Tibial artery (tissue), 4 donors: ENCODE measurements at regions of chr11 and their contacts with region 1.

Region 1: DNA sequence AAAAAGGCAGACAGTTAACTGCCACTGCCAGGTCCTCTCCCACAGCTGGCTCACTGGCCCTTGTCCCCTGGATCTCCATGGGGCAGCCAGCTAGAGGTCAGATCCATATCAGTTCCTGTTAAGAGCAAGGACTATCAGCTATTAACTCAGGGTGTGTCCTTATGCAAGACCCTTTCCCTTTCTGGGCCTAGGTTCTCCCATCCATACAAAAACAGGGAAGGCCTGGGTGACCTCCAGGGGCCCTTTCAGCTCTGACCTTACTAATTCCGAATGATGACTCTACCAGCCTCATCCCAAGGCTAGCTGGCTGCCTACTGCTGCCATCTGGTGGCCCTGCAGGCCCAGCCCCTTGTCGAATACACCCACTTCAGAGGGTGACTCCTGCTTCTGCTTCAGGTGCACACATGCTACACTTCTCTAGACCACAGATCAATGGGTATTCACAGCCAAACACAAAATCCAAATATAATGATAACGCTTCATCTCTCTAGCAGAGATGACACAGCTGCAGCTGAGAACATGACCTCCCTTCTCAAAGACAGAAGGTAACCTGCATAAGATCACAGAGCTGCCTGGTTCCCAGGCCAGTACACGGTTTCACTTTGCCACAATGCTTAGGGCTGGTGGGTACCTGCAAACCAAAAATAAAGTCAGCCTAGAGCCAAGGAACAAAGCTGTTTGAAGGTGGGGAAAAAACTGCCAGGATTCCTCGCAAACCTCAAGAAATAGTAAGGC is 34.1 kb downstream of the SERGEF start:
- DNase-seq: no peak
- H3K4me3 ChIP-seq: no peak overlapping the region
- H3K27ac ChIP-seq: no peak overlapping the region
- H3K4me1 ChIP-seq: no peaks in the 10 kb centered on the region
- H3K27me3 ChIP-seq: no peaks in the 10 kb centered on the region
- CTCF ChIP-seq: peak; percentile 24 to 37

Region 2: DNA sequence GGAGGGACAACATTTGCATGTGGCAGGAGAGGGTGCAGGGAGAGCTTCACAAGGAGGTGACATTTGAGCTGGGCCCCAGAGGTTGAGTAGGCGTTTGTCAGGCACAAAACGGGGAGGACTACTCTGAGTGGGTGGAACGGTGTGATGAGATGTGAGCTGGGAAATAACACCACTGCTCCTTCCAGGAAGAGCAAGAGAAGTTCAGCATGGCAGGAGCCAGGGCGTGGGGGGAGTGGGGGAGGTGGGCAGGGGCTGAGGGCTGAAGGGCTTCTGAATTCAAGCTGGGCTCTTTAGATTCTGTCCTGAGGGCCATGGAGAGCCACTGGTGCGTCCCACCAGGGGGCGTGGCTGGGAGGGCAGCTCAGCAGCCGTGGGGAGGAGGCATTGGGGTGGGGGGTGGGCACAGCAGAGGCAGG is 377.5 kb before region 1 on chr11:
- intact Hi-C with region 1: loop called (anchors 10 kb)
- DNase-seq: no peak
- H3K4me3 ChIP-seq: no peak overlapping the region
- H3K27ac ChIP-seq: no peak overlapping the region
- H3K4me1 ChIP-seq: no peaks in the 10 kb centered on the region
- H3K27me3 ChIP-seq: peaks cover 0 to 14% of the 10 kb centered on the region in 2 donors
- CTCF ChIP-seq: no peak

Region 3: DNA sequence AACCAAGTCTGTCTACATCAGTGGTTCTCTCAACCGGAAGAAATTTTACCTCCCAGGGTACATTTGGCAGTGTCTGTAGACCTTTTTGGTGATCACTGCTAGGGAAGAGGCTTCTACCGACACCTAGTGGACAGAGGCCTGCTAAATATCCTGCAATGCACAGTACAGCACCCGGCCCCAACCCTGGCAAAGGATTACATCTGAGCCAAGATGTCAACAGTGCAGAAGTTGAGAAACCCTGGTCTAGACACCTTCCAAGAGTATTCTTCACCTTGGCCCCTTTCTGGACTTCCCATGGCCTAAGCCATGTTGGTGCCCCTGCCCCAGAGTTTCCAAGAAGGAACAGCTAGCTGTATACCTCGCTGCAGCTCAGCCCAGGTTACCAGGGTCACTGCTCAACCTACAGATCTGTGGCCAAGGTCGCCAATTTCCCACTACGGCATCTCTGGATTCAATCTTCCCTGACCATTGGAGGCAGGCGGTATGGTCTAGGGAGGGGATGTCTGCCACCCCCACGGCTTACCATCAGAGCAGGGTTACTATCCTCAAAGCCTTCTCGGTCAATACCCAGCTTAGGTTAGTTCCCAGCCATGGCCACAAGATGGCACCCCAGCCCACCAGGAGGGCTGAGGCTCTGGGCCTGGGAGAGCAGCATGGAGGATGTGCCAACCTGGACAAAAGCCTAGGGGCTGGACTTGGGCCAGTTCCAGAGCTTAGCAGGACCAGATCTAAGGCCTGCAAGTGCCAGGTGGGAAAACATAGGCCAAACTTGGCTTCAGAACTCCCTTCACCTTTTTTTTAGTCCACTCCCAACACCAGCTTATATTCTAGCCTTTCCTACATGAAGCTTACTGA is 247.9 kb before region 1 on chr11:
- intact Hi-C with region 1: loop called (anchors 5 kb)
- DNase-seq: peak; percentile 60 to 78
- H3K4me3 ChIP-seq: no peak overlapping the region
- H3K27ac ChIP-seq: no peak overlapping the region
- H3K4me1 ChIP-seq: peaks cover 0 to 22% (median 18%) of the 10 kb centered on the region in 4 donors
- H3K27me3 ChIP-seq: peaks cover 0 to 34% of the 10 kb centered on the region in 2 donors
- CTCF ChIP-seq: peak; percentile 76 to 83

Region 4: GRCh38 chr11:17883946-17884345 is 94.8 kb before region 1 on chr11:
- intact Hi-C with region 1: no loop called
- DNase-seq: no peak
- H3K4me3 ChIP-seq: no peak overlapping the region
- H3K27ac ChIP-seq: no peak overlapping the region
- H3K4me1 ChIP-seq: no peaks in the 10 kb centered on the region
- H3K27me3 ChIP-seq: no peaks in the 10 kb centered on the region
- CTCF ChIP-seq: no peak

Region 5: GRCh38 chr11:17960091-17960490 is 18.6 kb before region 1 on chr11:
- intact Hi-C with region 1: no loop called
- DNase-seq: no peak
- H3K4me3 ChIP-seq: no peak overlapping the region
- H3K27ac ChIP-seq: no peak overlapping the region
- H3K4me1 ChIP-seq: peaks cover 0 to 5% (median 0%) of the 10 kb centered on the region in 4 donors
- H3K27me3 ChIP-seq: no peaks in the 10 kb centered on the region
- CTCF ChIP-seq: no peak

Region 6: DNA sequence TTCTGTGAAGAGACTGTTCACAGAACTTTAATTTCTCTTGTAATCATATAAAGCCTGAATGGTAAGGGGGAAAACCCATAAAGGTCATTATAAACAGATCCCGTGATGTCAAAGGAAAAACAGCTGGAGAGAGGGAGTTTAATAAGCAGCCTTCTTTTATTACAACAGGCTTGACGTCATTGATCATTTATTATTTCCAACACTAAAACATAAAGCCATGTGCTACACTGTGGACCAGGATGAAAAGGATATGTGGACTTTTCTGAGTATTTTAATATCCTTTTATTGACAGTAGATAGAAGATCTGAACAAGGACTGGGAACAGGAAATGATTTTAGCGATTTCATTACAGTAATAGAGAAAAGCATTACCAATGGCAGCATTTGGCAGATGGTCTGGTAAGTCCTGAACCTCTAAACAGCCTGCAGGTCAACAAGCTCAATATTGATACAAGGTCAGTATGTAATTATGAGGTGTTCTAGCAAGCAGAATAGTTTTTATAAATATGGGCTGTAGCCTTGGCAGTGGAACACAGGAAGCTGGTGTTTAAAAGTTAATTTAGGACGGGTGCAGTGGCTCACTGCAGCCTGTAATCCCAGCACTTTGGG is 92.5 kb after region 1 on chr11:
- intact Hi-C with region 1: no loop called
- DNase-seq: no peak
- H3K4me3 ChIP-seq: no peak overlapping the region
- H3K27ac ChIP-seq: no peak overlapping the region
- H3K4me1 ChIP-seq: no peaks in the 10 kb centered on the region
- H3K27me3 ChIP-seq: no peaks in the 10 kb centered on the region
- CTCF ChIP-seq: no peak